Activated CD4-positive, alpha-beta T cell treated with anti-CD3 and anti-CD28 coated beads for 36 hours (primary cell): ENCODE measurements at regions of chr1 and their contacts with region 1.

Region 1: GRCh38 chr1:11037740-11038182 is 9.3 kb downstream of the MASP2 start:
- DNase-seq: peak; percentile 95
- ATAC-seq: peak; percentile 99
- H3K4me3 Mint-ChIP-seq: no peak overlapping the region
- H3K27ac Mint-ChIP-seq: no peak overlapping the region
- H3K4me1 Mint-ChIP-seq: peaks cover 7% of the 10 kb centered on the region
- H3K27me3 Mint-ChIP-seq: no peaks in the 10 kb centered on the region

Region 2: GRCh38 chr1:10415211-10415930 is 622.4 kb before region 1 on chr1:
- CTCF ChIA-PET with region 1: no interaction called
- POLR2A ChIA-PET with region 1: no interaction called
- intact Hi-C with region 1: no loop called
- DNase-seq: no peak
- ATAC-seq: peak; percentile 68
- H3K4me3 Mint-ChIP-seq: no peak overlapping the region
- H3K27ac Mint-ChIP-seq: peak overlapping the region; percentile 83
- H3K4me1 Mint-ChIP-seq: peaks cover 6% of the 10 kb centered on the region
- H3K27me3 Mint-ChIP-seq: no peaks in the 10 kb centered on the region

Region 3: DNA sequence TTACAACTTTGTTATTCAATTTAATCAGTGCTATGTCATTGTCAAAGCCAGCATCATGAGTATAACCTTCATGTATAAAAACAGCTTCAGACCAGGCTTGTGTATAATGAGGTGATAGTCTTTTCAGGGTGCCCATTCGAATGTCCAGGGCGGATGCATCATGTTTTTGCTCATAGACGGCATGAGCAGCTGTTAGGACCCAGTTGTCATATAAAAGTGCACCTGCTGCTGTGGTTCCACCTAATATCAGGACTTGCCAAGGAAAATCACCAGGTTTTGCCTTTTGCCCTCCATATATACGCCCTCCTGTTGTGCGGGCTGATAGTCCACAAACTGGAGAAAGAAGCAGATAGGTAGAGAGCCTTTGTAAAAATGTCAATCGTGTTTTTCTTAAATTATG is 10.4 kb before region 1 on chr1:
- CTCF ChIA-PET with region 1: interaction called, 11 read pairs
- POLR2A ChIA-PET with region 1: no interaction called
- intact Hi-C with region 1: no loop called
- DNase-seq: no peak
- ATAC-seq: no peak
- H3K4me3 Mint-ChIP-seq: no peak overlapping the region
- H3K27ac Mint-ChIP-seq: no peak overlapping the region
- H3K4me1 Mint-ChIP-seq: peaks cover 22% of the 10 kb centered on the region
- H3K27me3 Mint-ChIP-seq: no peaks in the 10 kb centered on the region

Region 4: DNA sequence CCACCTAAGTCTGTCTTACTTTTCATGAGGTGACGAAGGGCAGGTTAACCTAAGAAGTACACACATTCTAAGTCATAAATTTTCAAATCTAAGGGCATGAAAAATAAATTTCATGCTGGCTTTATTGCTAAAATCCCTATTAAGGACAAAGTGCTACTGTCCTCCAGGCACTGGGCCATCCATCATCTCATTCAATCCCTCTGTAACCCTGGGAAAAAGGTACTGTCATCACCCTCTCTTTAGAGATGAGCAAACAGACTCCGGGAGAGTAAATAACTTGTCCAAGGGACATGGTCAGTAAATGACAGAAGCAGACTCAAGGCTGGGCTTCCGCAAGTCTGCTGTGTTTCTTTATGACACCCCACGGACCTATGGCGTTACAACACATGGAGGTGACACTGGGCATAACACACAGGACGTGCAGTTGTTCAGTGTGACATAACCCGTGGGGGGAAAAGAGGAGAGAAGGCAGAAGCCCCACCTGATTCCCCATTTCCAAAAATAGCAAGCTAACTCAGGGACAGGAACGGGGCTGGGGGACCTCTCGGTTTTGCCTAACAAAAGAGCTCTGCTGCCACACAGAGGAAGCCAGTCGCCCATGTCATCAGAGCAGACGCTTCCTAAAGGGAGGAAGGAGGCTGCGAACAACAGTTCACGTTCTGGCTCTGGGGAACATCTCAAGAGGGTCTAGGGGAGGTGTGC is 34.6 kb after region 1 on chr1:
- CTCF ChIA-PET with region 1: interaction called, 17 read pairs
- POLR2A ChIA-PET with region 1: no interaction called
- intact Hi-C with region 1: no loop called
- DNase-seq: no peak
- ATAC-seq: no peak
- H3K4me3 Mint-ChIP-seq: no peak overlapping the region
- H3K27ac Mint-ChIP-seq: no peak overlapping the region
- H3K4me1 Mint-ChIP-seq: peaks cover 9% of the 10 kb centered on the region
- H3K27me3 Mint-ChIP-seq: no peaks in the 10 kb centered on the region

Region 5: DNA sequence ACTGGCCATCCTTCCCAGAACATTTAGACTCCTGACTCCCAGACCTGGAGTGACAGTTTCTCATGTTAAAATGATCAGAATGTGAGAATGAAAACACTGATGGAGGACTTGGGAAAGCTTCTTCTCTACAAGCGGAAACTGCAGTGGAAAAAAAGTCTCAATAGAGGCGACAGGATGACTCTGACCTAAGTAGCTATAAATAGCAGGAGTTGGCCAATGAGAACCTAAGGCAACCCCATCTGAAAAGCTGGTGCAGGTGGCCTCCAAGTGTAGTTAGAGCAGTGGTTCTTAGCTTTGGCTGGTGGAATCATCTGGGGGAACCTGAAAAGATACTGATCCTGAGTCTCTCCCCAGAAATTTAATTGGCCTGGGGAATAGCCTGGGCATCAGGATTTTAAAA is 106.1 kb after region 1 on chr1:
- CTCF ChIA-PET with region 1: interaction called, 10 read pairs
- POLR2A ChIA-PET with region 1: no interaction called
- intact Hi-C with region 1: no loop called
- DNase-seq: peak; percentile 26
- ATAC-seq: peak; percentile 74
- H3K4me3 Mint-ChIP-seq: no peak overlapping the region
- H3K27ac Mint-ChIP-seq: peak overlapping the region; percentile 83
- H3K4me1 Mint-ChIP-seq: peaks cover 15% of the 10 kb centered on the region
- H3K27me3 Mint-ChIP-seq: no peaks in the 10 kb centered on the region

Region 6: GRCh38 chr1:11248155-11248554 is 210.4 kb after region 1 on chr1:
- CTCF ChIA-PET with region 1: interaction called, 5 read pairs
- POLR2A ChIA-PET with region 1: no interaction called
- intact Hi-C with region 1: loop called in 1 of 2 experiments (anchors 5 kb)
- DNase-seq: no peak
- ATAC-seq: no peak
- H3K4me3 Mint-ChIP-seq: no peak overlapping the region
- H3K27ac Mint-ChIP-seq: no peak overlapping the region
- H3K4me1 Mint-ChIP-seq: peaks cover 7% of the 10 kb centered on the region
- H3K27me3 Mint-ChIP-seq: no peaks in the 10 kb centered on the region

Region 7: DNA sequence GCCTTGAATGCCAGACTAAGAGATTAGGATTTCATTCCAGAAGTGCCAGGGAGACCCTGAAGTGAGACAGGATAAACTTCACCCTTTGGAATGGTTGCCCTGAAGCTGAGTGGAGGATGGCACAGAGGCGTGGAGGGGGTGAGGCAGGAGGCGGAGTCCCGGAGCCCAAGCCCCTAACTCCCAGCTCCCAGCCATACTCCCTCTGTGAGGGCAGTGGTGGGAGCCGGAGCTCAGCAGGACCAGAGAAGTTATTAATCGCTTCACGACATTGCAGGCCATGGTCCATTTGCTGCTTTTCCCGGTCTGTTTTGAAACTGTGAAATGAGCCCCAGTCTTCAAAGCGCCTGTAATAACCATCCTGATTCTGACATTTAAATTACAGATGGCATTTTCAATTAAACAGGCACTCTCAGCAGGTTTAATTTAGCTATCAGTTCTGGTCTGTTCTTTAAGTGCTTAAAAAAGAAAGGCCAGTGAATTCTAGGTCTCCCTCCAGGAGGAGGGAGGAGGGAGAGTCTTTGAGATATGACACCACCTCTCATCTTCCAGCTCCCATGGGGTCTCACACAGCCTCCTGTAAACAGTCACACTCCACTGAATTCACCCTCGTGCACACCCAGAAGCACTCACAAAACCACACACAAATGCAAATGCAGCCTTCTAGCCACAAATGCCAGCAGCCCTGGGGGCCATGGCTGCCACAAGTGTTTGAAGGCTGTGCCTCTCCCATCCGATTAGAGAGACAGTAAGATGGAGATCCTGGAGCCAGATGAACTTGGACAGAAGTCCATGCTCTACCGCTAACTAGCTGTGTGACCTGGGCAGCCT is 596.8 kb after region 1 on chr1:
- CTCF ChIA-PET with region 1: interaction called, 12 read pairs
- POLR2A ChIA-PET with region 1: no interaction called
- intact Hi-C with region 1: no loop called
- DNase-seq: no peak
- ATAC-seq: no peak
- H3K4me3 Mint-ChIP-seq: no peak overlapping the region
- H3K27ac Mint-ChIP-seq: no peak overlapping the region
- H3K4me1 Mint-ChIP-seq: no peaks in the 10 kb centered on the region
- H3K27me3 Mint-ChIP-seq: peaks cover 7% of the 10 kb centered on the region

Region 8: DNA sequence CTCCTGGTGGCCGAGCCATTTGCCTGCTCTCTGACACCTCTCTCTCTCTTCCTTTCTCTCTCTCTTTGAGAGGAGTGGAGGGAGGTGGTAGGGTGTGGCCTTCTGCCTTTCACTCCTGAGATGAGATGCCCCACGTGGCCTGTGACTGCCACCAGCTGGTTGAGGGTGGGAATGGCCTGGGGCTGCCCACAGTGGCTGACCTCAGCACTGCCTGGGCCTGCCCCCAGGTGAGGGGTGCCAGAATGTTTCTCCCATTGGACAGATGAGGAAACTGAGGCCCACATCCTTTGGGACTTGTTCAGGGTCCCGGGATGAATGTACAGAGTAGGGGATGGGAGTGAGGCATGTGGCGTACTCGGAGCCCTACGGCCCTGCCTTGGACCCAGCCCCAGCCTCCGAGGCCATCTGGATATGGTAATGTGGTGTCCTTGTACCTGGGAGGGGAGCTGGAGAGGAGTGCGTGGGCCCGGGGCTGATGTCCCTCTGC is 711.5 kb after region 1 on chr1:
- CTCF ChIA-PET with region 1: no interaction called
- POLR2A ChIA-PET with region 1: no interaction called
- intact Hi-C with region 1: loop called in 1 of 2 experiments (anchors 1 kb)
- DNase-seq: peak; percentile 84
- ATAC-seq: peak; percentile 98
- H3K4me3 Mint-ChIP-seq: no peak overlapping the region
- H3K27ac Mint-ChIP-seq: peak overlapping the region; percentile 74
- H3K4me1 Mint-ChIP-seq: peaks cover 6% of the 10 kb centered on the region
- H3K27me3 Mint-ChIP-seq: no peaks in the 10 kb centered on the region